ENCODE measurements at regions of chr11 and their contacts with region 1.

Region 1: GRCh38 chr11:46121724-46122477 is 647 bp upstream of the PHF21A start:
- DNase-seq: peak; percentile 55 to 79 (median 71)
- H3K4me3 ChIP-seq: peak overlapping the region; percentile 59 to 89 (median 76)
- H3K27ac ChIP-seq: peak overlapping the region; percentile 79 to 99 (median 94)
- H3K27me3 ChIP-seq: no peaks in the 10 kb centered on the region
- CTCF ChIP-seq: peak in 4 of 56 donors; percentile 5 to 19 (median 15)

Region 2: DNA sequence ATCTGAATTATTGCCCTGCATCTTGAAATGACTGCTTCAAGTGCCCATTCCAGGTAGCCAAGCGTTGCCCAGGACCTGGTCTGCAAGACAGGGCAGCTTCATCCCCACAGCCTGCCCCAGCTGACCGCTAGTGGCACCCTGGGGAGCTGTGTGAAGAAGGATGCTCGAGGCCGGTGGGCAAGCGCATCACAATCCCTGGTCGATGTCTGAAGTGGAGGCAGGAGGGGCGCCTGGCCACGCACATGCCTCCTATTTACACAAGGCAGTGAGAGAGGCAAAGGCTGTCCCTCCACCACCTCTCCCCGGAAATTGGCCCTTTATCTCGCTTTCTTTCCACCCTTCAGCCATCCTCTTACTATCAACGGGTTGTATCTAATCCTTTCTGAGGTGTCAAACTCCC is 27.4 kb after region 1 on chr11:
- intact Hi-C with region 1: no loop called
- DNase-seq: no peak
- H3K4me3 ChIP-seq: no peak overlapping the region
- H3K27ac ChIP-seq: no peak overlapping the region
- H3K27me3 ChIP-seq: peaks cover 0 to 4% (median 0%) of the 10 kb centered on the region in 45 donors
- CTCF ChIP-seq: no peak

Region 3: GRCh38 chr11:46346886-46347636 is 225.2 kb after region 1 on chr11 and contains the start of gene DGKZ:
- intact Hi-C with region 1: loop called in 1 of 2 experiments (anchors 10 kb)
- DNase-seq: peak; percentile 78 to 95 (median 88)
- H3K4me3 ChIP-seq: peak within 1 kb of the TSS; percentile 42 to 90 (median 79)
- H3K27ac ChIP-seq: peak within 1 kb of the TSS in 56 of 59 donors; percentile 15 to 91 (median 82)
- H3K27me3 ChIP-seq: no peaks in the 10 kb centered on the region
- CTCF ChIP-seq: peak; percentile 31 to 92 (median 71)
- total RNA-seq, gene DGKZ: 142 to 475 (median 319) TPM

Measured in dorsolateral prefrontal cortex (tissue), 120 donors.